ENCODE measurements at regions of chr1 and their contacts with region 1.

Region 1: GRCh38 chr1:81756872-81757271 is 43.9 kb upstream of the ADGRL2 start:
- DNase-seq: no peak
- ATAC-seq: no peak
- H3K4me3 ChIP-seq: no peak overlapping the region
- H3K27ac ChIP-seq: no peak overlapping the region
- H3K4me1 ChIP-seq: no peaks in the 10 kb centered on the region
- H3K27me3 ChIP-seq: no peaks in the 10 kb centered on the region

Region 2: DNA sequence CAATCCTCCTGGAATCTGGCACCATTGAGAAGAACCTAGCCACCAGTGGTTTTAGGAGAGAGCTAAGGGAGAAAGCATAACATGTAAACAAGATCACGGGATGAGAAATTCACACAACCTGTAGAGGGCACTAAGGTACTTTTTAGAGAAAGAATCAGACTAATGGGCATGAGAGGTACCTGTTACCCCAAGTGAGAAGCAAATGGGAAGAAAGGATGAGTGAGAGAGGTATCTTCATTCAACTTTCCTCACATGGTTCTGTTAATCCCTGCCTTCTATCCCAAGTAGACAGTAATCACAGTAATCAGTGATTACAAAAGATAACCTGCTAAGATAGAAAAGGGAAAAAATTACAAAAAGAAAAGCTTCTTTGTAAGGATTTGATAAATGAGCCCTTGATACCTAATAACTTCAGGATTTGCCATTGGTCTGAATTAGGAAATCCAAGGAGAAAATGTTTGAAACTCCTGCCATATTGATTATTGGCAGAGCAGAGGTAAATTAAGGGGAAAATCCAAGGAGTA is 207.2 kb before region 1 on chr1:
- intact Hi-C with region 1: loop called in 1 of 4 experiments (anchors 10 kb)
- DNase-seq: no peak
- ATAC-seq: peak; percentile 40 to 57
- H3K4me3 ChIP-seq: no peak overlapping the region
- H3K27ac ChIP-seq: no peak overlapping the region
- H3K4me1 ChIP-seq: no peaks in the 10 kb centered on the region
- H3K27me3 ChIP-seq: no peaks in the 10 kb centered on the region

Region 3: DNA sequence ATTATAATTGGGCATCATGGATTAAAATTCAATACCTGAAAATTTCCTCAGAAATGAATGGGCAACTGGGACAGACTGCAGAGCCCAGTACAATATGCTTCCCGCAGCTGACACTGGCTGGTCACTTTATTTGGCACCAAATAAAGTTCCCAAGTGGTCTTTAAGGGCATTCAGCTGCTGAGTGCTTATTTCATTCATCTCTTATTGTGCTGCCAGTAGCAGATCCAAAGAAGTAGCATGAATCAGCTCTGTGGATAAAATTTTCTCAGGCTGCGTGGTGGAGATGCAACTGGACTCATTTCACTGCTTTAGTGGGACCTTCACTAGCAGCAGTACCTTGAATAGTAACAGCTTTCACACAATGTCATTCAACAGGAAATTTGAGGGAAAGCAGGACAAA is 182.5 kb before region 1 on chr1:
- intact Hi-C with region 1: no loop called
- DNase-seq: peak in 1 of 3 donors; percentile 29
- ATAC-seq: peak; percentile 66 to 75
- H3K4me3 ChIP-seq: peak overlapping the region; percentile 15
- H3K27ac ChIP-seq: no peak overlapping the region
- H3K4me1 ChIP-seq: peaks cover 6% of the 10 kb centered on the region
- H3K27me3 ChIP-seq: no peaks in the 10 kb centered on the region